Tibial artery (tissue), 4 donors: ENCODE measurements at regions of chr9 and their contacts with region 1.

Region 1: DNA sequence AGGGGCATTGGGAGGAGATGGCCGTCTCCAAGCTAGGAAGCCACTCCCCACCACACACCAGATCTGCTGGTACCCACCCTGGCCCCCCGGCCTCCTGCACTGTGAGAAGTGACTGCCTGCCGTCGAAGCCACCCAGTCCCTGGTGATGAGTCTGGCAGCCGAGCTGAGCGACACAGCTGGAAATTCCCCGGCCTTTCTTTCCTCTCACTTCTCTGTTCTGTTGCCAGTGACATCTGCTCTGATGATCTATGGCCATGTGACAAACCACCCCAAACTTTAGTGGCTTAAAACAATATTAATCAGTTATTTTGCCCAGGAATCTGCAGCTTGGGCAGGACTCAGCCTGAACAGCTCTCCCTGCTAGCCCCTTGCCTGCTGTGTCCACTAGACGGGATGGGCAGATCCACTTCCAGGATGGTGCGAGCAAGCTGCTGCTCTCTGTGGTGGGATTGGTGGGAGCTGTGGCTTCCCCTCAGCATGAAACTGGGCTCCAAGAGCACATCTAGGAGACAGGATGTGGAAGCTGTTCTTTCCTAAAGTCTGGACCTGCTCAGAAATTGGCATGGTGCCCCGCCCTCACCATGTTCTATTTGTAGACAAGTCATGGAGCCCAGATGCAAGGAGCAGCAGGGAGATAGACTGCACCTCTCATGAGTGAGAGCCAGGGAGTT is 211.2 kb downstream of the GADD45G start:
- DNase-seq: no peak
- H3K4me3 ChIP-seq: no peak overlapping the region
- H3K27ac ChIP-seq: no peak overlapping the region
- H3K4me1 ChIP-seq: peaks cover 0 to 12% (median 9%) of the 10 kb centered on the region in 4 donors
- H3K27me3 ChIP-seq: peaks cover 0 to 10% of the 10 kb centered on the region in 2 donors
- CTCF ChIP-seq: no peak

Region 2: GRCh38 chr9:89732295-89732938 is 83.6 kb before region 1 on chr9:
- intact Hi-C with region 1: loop called (anchors 10 kb)
- DNase-seq: no peak
- H3K4me3 ChIP-seq: no peak overlapping the region
- H3K27ac ChIP-seq: no peak overlapping the region
- H3K4me1 ChIP-seq: peaks cover 0 to 7% (median 3%) of the 10 kb centered on the region in 4 donors
- H3K27me3 ChIP-seq: no peaks in the 10 kb centered on the region
- CTCF ChIP-seq: no peak